ENCODE measurements at regions of chr10 and their contacts with region 1.

Region 1: GRCh38 chr10:97037365-97038361 is 148.1 kb downstream of the SLIT1 start:
- DNase-seq: peak; percentile 73 to 84
- ATAC-seq: peak; percentile 83 to 96 (median 92)
- H3K4me3 ChIP-seq: peak overlapping the region; percentile 56
- H3K27ac ChIP-seq: no peak overlapping the region
- H3K4me1 ChIP-seq: peaks cover 5% of the 10 kb centered on the region
- H3K27me3 ChIP-seq: no peaks in the 10 kb centered on the region
- CTCF ChIP-seq: peak; percentile 85

Region 2: GRCh38 chr10:97048649-97049427 is 11.2 kb after region 1 on chr10:
- intact Hi-C with region 1: no loop called
- DNase-seq: no peak
- ATAC-seq: no peak
- H3K4me3 ChIP-seq: no peak overlapping the region
- H3K27ac ChIP-seq: no peak overlapping the region
- H3K4me1 ChIP-seq: no peaks in the 10 kb centered on the region
- H3K27me3 ChIP-seq: no peaks in the 10 kb centered on the region
- CTCF ChIP-seq: no peak

Region 3: DNA sequence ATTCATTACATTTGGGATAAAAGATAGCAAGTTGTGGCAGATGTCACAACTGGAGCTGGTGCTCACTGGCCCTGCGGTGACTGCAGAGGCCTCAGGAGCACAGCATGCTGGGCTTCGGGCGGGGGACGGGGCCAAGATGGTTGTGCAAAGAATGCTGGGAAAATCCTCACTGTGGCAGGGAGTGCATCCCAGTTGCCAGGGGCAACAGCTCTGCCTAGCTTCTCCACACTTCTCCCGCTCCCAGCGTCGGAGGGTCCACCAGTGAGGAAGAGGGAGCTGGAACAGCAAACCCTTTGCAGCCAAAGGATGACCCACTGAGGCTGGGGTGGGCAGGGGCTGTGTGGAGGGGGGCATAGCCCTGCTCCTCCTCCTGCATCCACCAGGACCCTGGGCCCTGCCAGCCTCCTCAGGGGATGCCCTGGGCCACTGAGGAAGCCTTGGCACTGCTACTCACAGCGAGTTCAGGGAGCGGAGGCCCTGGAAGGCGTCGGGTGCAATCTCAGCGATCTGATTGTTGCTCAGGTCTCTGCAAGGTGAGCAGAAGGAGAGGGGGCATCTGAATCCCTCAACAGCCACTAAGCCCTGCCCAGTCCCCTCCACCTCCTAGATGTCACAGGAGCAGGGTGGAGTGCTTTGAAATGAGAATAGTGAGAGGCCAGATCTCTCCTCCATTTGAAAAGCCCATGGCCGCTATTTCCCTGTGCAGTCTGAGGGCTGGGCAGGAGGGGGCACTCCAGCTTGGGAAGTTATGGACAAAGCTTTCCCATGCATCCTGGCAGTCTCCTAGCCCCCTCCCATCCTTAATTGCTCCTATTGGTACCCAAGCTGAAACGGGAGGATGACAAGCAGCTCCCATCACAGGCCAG is 21.6 kb after region 1 on chr10:
- intact Hi-C with region 1: no loop called
- DNase-seq: no peak
- ATAC-seq: no peak
- H3K4me3 ChIP-seq: no peak overlapping the region
- H3K27ac ChIP-seq: no peak overlapping the region
- H3K4me1 ChIP-seq: peaks cover 13% of the 10 kb centered on the region
- H3K27me3 ChIP-seq: no peaks in the 10 kb centered on the region
- CTCF ChIP-seq: no peak

Region 4: DNA sequence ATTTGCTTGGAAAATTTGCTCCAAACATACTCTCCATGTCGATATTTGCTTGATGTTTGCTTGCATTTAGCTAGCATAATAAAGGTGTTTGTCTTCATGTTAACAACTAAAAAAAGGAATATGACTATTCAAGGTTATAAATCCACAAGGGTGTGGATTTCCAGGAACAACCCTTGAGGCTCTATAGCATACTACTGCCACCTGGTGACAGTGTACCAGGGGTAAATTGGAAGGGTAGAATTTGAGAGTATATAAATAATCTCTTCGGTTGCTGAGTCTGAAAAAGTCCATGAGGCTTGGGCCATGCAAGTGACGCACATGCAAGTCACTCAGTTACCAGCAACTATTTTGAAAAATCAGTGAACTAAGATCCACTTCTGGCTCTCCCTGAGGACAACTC is 79.7 kb after region 1 on chr10:
- intact Hi-C with region 1: loop called in 1 of 2 experiments (anchors 2 kb)
- DNase-seq: no peak
- ATAC-seq: peak; percentile 82 to 99 (median 95)
- H3K4me3 ChIP-seq: no peak overlapping the region
- H3K27ac ChIP-seq: no peak overlapping the region
- H3K4me1 ChIP-seq: peaks cover 5% of the 10 kb centered on the region
- H3K27me3 ChIP-seq: no peaks in the 10 kb centered on the region
- CTCF ChIP-seq: peak; percentile 74